Caco-2 (cell line): ENCODE measurements at regions of chr2 and their contacts with region 1.

Region 1: DNA sequence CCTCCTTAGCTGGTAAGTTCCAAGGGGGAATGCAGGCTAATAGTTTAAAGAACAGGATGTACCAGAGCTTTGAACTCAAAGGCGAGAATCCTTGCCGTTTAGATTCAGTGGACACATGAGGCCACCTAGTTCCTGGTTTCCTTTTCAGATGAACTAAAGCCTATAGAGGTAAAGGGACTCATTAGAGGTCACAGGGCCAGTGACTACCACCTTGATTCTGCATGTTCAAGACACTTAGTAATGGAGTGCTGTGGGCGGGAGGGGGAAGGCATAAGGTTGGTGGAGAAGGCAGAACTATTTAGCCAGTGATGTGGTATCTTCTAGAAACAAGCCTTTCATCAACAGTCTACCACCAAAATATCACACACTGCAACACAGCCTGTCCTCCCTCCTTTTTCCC is 47.9 kb downstream of the ARHGEF33 start:
- DNase-seq: no peak
- H3K4me3 ChIP-seq: no peak overlapping the region
- H3K4me3 Mint-ChIP-seq: no peak overlapping the region
- H3K27ac Mint-ChIP-seq: no peak overlapping the region
- H3K4me1 ChIP-seq: peaks cover 10% of the 10 kb centered on the region
- H3K4me1 Mint-ChIP-seq: peaks cover 11% of the 10 kb centered on the region
- H3K27me3 ChIP-seq: no peaks in the 10 kb centered on the region; the same call in 1 of the 2 replicates
- H3K27me3 Mint-ChIP-seq: no peaks in the 10 kb centered on the region
- CTCF ChIP-seq: no peak

Region 2: GRCh38 chr2:38765149-38765548 is 172.4 kb before region 1 on chr2:
- CTCF ChIA-PET with region 1: no interaction called
- POLR2A ChIA-PET with region 1: interaction called, 10 read pairs
- intact Hi-C with region 1: no loop called
- DNase-seq: no peak
- H3K4me3 ChIP-seq: no peak overlapping the region
- H3K4me3 Mint-ChIP-seq: no peak overlapping the region
- H3K27ac Mint-ChIP-seq: no peak overlapping the region
- H3K4me1 ChIP-seq: peaks cover 5% of the 10 kb centered on the region; the same call in 1 of the 2 replicates
- H3K4me1 Mint-ChIP-seq: no peaks in the 10 kb centered on the region
- H3K27me3 ChIP-seq: no peaks in the 10 kb centered on the region; the same call in 1 of the 2 replicates
- H3K27me3 Mint-ChIP-seq: no peaks in the 10 kb centered on the region
- CTCF ChIP-seq: no peak

Region 3: DNA sequence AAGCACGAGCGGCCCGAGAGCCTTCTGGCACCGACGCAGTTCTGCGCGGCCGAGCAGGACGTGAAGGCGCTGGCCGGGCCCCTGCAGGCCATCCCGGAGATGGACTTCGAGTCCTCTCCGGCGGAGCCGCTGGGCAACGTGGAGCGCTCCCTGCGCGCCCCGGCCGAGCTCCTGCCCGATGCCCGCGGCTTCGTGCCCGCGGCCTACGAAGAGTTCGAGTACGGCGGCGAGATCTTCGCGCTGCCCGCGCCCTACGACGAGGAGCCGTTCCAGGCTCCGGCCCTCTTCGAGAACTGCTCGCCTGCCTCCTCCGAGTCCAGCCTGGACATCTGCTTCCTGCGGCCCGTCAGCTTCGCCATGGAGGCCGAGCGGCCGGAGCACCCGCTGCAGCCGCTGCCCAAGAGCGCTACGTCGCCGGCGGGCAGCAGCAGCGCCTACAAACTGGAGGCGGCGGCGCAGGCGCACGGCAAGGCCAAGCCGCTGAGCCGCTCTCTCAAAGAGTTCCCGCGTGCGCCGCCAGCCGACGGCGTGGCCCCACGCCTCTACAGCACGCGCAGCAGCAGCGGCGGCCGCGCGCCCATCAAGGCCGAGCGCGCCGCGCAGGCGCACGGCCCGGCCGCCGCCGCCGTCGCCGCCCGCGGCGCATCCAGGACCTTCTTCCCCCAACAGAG is 22.5 kb after region 1 on chr2:
- CTCF ChIA-PET with region 1: no interaction called
- POLR2A ChIA-PET with region 1: no interaction called
- intact Hi-C with region 1: no loop called
- DNase-seq: no peak
- H3K4me3 ChIP-seq: no peak overlapping the region
- H3K4me3 Mint-ChIP-seq: no peak overlapping the region
- H3K27ac Mint-ChIP-seq: no peak overlapping the region
- H3K4me1 ChIP-seq: no peaks in the 10 kb centered on the region
- H3K4me1 Mint-ChIP-seq: no peaks in the 10 kb centered on the region
- H3K27me3 ChIP-seq: no peaks in the 10 kb centered on the region
- H3K27me3 Mint-ChIP-seq: no peaks in the 10 kb centered on the region
- CTCF ChIP-seq: no peak

Region 4: DNA sequence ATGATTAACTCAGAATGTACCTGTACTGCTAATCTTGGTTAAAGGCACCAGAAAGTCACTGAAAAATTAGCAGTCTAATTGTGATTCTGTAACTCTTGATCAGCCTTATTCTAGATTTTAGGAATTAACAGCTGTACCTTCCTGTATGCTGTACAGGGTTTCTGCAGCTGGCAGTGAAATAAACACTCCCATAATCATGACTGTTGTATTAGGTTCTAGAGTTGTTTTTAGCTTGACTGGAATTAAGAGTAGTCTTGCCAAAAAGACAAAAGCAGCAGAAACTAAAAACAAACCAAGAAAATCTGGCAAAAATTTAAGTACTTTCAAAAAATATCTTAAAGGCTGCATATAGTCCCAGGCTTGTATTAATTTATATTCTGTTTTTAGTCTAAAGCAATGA is 79.8 kb after region 1 on chr2:
- CTCF ChIA-PET with region 1: no interaction called
- POLR2A ChIA-PET with region 1: no interaction called
- intact Hi-C with region 1: no loop called
- DNase-seq: no peak
- H3K4me3 ChIP-seq: no peak overlapping the region
- H3K4me3 Mint-ChIP-seq: no peak overlapping the region
- H3K27ac Mint-ChIP-seq: no peak overlapping the region
- H3K4me1 ChIP-seq: no peaks in the 10 kb centered on the region
- H3K4me1 Mint-ChIP-seq: no peaks in the 10 kb centered on the region
- H3K27me3 ChIP-seq: no peaks in the 10 kb centered on the region
- H3K27me3 Mint-ChIP-seq: no peaks in the 10 kb centered on the region
- CTCF ChIP-seq: no peak